Calu3 (cell line): ENCODE measurements at regions of chr5 and their contacts with region 1.

Region 1: GRCh38 chr5:170809551-170809950 is 26.0 kb downstream of the GABRP start:
- DNase-seq: no peak
- H3K4me3 Mint-ChIP-seq: no peak overlapping the region
- H3K27ac Mint-ChIP-seq: peak overlapping the region; percentile 55
- H3K4me1 Mint-ChIP-seq: no peaks in the 10 kb centered on the region
- H3K27me3 Mint-ChIP-seq: no peaks in the 10 kb centered on the region
- CTCF ChIP-seq: peak; percentile 60

Region 2: GRCh38 chr5:170832254-170832653 is 22.7 kb after region 1 on chr5:
- CTCF ChIA-PET with region 1: interaction called, 11 read pairs
- intact Hi-C with region 1: no loop called
- DNase-seq: no peak
- H3K4me3 Mint-ChIP-seq: no peak overlapping the region
- H3K27ac Mint-ChIP-seq: no peak overlapping the region
- H3K4me1 Mint-ChIP-seq: peaks cover 28% of the 10 kb centered on the region
- H3K27me3 Mint-ChIP-seq: no peaks in the 10 kb centered on the region
- CTCF ChIP-seq: no peak

Region 3: GRCh38 chr5:170848033-170848432 is 38.5 kb after region 1 on chr5:
- CTCF ChIA-PET with region 1: no interaction called
- intact Hi-C with region 1: loop called (anchors 5 kb)
- DNase-seq: peak; percentile 80
- H3K4me3 Mint-ChIP-seq: no peak overlapping the region
- H3K27ac Mint-ChIP-seq: peak overlapping the region; percentile 13
- H3K4me1 Mint-ChIP-seq: peaks cover 40% of the 10 kb centered on the region
- H3K27me3 Mint-ChIP-seq: no peaks in the 10 kb centered on the region
- CTCF ChIP-seq: no peak

Region 4: GRCh38 chr5:170861837-170862766 is 52.6 kb after region 1 on chr5 and contains the start of gene RANBP17:
- CTCF ChIA-PET with region 1: no interaction called
- intact Hi-C with region 1: loop called (anchors 5 kb)
- DNase-seq: peak; percentile 92
- H3K4me3 Mint-ChIP-seq: peak within 1 kb of the TSS; percentile 70
- H3K27ac Mint-ChIP-seq: peak within 1 kb of the TSS; percentile 86
- H3K4me1 Mint-ChIP-seq: peaks cover 46% of the 10 kb centered on the region
- H3K27me3 Mint-ChIP-seq: no peaks in the 10 kb centered on the region
- CTCF ChIP-seq: no peak
- total RNA-seq, gene RANBP17: 69.3 and 117 TPM in 2 replicates

Region 5: GRCh38 chr5:170917113-170917512 is 107.6 kb after region 1 on chr5:
- CTCF ChIA-PET with region 1: interaction called, 5 read pairs
- intact Hi-C with region 1: loop called (anchors 1 kb)
- DNase-seq: no peak
- H3K4me3 Mint-ChIP-seq: no peak overlapping the region
- H3K27ac Mint-ChIP-seq: peak overlapping the region; percentile 18
- H3K4me1 Mint-ChIP-seq: no peaks in the 10 kb centered on the region
- H3K27me3 Mint-ChIP-seq: no peaks in the 10 kb centered on the region
- CTCF ChIP-seq: no peak

Region 6: DNA sequence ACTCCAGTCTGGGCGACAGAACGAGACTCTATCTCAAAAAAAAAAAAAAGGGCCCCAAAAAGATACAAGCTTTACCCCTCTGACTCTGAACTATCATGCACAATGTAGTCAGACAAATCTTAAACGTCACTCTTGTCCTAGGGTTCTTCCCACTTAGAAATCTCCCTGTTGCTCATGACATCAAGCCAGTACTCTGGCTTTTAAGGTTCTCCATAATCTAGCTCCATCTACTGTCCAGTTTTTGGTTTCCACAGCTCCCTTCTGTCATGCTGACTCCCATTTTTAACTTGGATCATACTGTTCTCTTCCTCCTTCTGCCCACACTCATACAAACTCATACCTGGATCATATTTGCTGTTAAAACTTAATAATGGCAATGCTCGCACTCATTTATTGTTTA is 342.8 kb after region 1 on chr5:
- CTCF ChIA-PET with region 1: no interaction called
- intact Hi-C with region 1: loop called (anchors 10 kb)
- DNase-seq: no peak
- H3K4me3 Mint-ChIP-seq: no peak overlapping the region
- H3K27ac Mint-ChIP-seq: no peak overlapping the region
- H3K4me1 Mint-ChIP-seq: no peaks in the 10 kb centered on the region
- H3K27me3 Mint-ChIP-seq: no peaks in the 10 kb centered on the region
- CTCF ChIP-seq: no peak

Region 7: GRCh38 chr5:171201310-171201709 is 391.8 kb after region 1 on chr5:
- CTCF ChIA-PET with region 1: no interaction called
- intact Hi-C with region 1: no loop called
- DNase-seq: no peak
- H3K4me3 Mint-ChIP-seq: no peak overlapping the region
- H3K27ac Mint-ChIP-seq: no peak overlapping the region
- H3K4me1 Mint-ChIP-seq: no peaks in the 10 kb centered on the region
- H3K27me3 Mint-ChIP-seq: no peaks in the 10 kb centered on the region
- CTCF ChIP-seq: no peak

Region 8: DNA sequence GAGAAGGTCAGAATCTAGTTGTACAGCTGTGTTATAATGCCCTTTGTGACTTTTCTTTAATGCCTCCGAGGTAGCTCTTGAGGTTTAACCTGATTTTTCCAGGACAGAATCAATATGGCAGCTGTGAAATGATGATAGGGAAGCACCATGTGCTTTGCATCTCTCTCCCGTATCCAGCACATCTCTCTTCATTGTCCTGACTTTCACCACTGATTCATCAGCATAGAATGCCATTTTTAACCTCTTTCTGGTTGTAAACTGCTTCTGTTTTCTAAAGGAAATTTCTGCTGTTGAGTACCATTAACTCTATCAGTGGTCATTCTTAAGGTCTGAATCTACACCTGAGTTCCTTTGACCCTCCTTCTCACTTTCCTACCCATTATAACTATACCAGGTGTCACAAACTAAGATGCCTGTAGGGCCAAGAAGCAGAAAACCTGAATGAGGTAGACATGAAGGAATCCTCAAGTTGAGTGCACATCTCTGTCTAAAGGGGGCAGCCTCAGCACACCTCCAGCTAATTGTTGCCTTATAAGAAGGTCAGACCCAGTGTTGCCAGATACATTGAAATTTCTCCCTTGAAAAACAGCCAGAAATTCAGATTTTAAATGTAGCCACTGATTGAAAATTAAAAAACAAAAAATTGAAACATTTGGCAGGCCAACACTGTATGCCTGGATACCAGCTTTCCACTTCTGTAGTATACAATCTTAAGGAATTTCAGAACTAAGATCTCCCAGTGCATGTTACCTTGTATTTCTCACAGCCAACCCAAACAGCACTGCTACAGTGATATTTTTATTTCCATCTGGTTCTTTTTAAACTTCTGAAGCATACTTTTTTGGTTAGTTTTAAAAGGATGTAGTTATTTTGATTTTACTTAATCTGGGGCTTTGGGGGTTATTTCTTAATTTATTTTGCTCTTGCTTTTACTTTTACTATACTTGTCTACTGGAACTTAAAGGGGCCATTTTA is 463.7 kb after region 1 on chr5:
- CTCF ChIA-PET with region 1: no interaction called
- intact Hi-C with region 1: no loop called
- DNase-seq: peak; percentile 36
- H3K4me3 Mint-ChIP-seq: no peak overlapping the region
- H3K27ac Mint-ChIP-seq: no peak overlapping the region
- H3K4me1 Mint-ChIP-seq: peaks cover 31% of the 10 kb centered on the region
- H3K27me3 Mint-ChIP-seq: no peaks in the 10 kb centered on the region
- CTCF ChIP-seq: peak; percentile 49

Region 9: DNA sequence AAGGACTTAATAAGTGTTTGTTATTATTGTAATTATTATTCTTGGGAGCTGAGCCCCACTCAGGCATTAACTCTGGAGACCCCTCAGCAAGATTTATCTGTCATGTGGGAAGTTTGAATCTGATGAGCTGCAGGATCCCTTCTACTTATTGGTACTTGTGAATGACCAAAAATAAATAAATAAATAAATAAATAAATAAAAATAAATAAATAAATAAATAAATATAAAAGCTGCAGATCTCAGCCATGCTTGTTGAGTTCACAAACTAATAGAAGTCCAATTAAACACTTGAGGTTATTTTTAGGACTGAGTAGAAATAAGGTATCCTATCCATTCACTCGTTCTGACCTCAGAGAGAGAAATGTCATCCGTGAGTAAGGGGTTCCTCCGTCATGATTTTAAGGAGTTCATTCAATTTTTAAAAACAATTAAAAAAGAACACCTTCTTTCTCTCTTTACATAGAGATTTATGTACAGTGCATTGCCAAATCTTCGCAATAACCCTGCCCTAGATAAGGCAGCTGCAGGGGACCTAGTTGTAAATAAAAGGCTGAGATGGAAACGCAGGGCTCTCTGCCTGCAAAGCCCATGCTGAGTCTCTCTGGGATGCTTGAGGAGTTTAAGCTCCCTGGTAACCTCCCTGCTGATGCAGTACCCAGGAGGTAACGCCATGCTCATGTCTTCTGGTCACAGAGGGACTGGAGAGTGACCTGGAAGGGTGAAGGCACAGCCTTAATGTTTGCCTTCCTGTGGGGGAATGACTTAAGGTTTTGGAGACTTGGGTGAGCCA is 1385.6 kb after region 1 on chr5:
- CTCF ChIA-PET with region 1: no interaction called
- intact Hi-C with region 1: no loop called
- DNase-seq: no peak
- H3K4me3 Mint-ChIP-seq: no peak overlapping the region
- H3K27ac Mint-ChIP-seq: no peak overlapping the region
- H3K4me1 Mint-ChIP-seq: no peaks in the 10 kb centered on the region
- H3K27me3 Mint-ChIP-seq: peaks cover 2% of the 10 kb centered on the region
- CTCF ChIP-seq: no peak